ENCODE measurements at regions of chr17 and their contacts with region 1.

Region 1: GRCh38 chr17:69335058-69335457 is 8.1 kb upstream of the ABCA5 start:
- DNase-seq: no peak
- H3K4me3 Mint-ChIP-seq: no peak overlapping the region
- H3K27ac Mint-ChIP-seq: no peak overlapping the region
- H3K4me1 Mint-ChIP-seq: no peaks in the 10 kb centered on the region
- H3K27me3 Mint-ChIP-seq: peaks cover 21% of the 10 kb centered on the region

Region 2: GRCh38 chr17:69390795-69391501 is 55.9 kb after region 1 on chr17:
- intact Hi-C with region 1: loop called (anchors 10 kb)
- DNase-seq: no peak
- H3K4me3 Mint-ChIP-seq: no peak overlapping the region
- H3K27ac Mint-ChIP-seq: no peak overlapping the region
- H3K4me1 Mint-ChIP-seq: no peaks in the 10 kb centered on the region
- H3K27me3 Mint-ChIP-seq: peaks cover 5% of the 10 kb centered on the region